ENCODE measurements at regions of chr18 and their contacts with region 1.

Region 1: GRCh38 chr18:34773961-34774766 is 64.1 kb downstream of the DTNA start:
- DNase-seq: no peak
- H3K4me3 ChIP-seq: no peak overlapping the region
- H3K27me3 ChIP-seq: no peaks in the 10 kb centered on the region
- CTCF ChIP-seq: no peak

Region 2: DNA sequence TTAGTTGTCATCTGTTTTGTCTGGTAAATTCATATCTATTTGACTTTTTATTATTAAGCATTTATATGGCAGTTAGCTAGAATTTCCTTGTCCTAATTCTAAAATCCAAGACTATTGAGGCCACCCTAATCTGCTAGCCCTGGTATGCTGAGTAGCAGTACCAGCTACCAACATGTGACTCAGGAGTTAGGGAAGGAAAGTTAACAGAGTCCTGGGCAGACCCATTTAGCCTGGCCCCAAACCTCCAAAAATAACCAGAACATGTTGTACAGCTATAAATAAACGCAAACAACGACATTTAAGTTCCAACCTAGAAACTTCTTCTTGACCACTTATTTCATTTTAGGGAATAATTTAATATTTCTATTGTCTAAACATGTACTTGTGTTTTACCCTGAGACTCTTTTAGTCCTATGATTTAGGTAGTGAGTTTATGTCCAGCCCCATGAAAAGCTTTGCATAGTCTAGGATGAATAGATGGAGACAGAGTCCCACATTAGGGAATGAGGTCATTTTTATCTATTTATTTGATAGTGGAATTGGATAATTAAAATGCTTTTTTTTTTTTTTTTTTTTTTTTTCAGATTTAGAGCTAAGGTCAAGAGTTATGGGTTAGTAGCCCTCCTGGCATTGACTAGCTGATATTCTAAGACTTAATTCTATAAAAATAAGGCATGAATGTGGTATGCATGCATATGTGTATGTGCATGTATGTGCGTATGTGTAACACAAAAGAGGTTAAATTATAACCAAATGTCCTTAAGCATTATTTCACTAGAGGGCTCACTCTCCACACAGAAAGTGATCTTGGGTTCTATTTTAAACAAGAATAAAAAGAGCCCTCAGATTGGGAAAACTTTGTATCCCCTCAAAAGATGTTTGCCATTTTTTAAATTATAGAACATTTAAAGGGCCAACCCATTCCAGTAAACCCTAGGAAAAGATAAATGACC is 107.0 kb after region 1 on chr18:
- CTCF ChIA-PET with region 1: no interaction called
- POLR2A ChIA-PET with region 1: interaction called, 14 read pairs
- DNase-seq: no peak
- H3K4me3 ChIP-seq: no peak overlapping the region
- H3K27me3 ChIP-seq: no peaks in the 10 kb centered on the region
- CTCF ChIP-seq: no peak

Measured in BJ (cell line).